GM10248 (cell line): ENCODE measurements at regions of chr1 and their contacts with region 1.

Region 1: GRCh38 chr1:67479146-67479891 is 49.1 kb upstream of the SERBP1 start:
- DNase-seq: no peak
- CTCF ChIP-seq: no peak

Region 2: DNA sequence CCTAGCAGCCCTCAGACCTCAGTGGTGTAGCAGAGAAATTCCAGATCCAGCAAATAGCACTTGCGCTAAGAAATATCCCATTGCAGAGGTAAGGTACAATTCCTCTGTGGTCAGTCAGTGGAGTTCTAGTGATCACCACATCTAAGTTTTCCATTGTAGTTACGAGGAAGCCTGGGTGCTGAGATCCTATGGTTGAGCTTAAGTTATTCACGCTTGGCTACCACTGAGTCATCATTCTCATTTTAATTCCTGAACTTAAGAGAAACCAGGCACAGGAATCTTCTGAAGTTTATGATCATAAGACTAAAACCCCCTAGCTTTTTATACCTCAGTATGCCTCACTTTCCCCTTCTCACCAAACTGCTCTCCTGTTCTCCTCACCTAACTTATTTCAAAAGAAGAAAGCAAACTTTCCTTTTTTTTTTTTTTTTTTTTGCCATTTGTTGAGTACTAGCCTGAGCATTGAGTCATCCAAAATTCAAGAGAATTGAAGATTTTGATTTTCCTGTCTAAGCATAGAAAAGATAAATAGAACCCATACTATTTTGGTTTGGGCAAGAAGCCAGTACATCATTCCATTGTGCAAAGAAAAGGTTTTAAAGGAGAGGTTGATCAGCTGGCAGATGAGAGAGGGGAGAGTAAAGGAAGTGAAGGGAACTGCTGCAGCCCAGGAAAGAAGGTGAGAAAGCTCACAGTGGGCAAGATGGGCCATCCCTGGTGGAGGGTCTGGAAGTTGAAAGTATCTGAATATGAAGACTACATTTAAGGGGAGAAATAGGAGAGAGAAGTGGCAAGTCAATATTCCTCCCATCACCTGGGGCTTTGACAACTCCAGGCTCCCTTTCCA is 89.1 kb before region 1 on chr1:
- CTCF ChIA-PET with region 1: no interaction called
- POLR2A ChIA-PET with region 1: no interaction called
- DNase-seq: no peak
- CTCF ChIP-seq: no peak

Region 3: DNA sequence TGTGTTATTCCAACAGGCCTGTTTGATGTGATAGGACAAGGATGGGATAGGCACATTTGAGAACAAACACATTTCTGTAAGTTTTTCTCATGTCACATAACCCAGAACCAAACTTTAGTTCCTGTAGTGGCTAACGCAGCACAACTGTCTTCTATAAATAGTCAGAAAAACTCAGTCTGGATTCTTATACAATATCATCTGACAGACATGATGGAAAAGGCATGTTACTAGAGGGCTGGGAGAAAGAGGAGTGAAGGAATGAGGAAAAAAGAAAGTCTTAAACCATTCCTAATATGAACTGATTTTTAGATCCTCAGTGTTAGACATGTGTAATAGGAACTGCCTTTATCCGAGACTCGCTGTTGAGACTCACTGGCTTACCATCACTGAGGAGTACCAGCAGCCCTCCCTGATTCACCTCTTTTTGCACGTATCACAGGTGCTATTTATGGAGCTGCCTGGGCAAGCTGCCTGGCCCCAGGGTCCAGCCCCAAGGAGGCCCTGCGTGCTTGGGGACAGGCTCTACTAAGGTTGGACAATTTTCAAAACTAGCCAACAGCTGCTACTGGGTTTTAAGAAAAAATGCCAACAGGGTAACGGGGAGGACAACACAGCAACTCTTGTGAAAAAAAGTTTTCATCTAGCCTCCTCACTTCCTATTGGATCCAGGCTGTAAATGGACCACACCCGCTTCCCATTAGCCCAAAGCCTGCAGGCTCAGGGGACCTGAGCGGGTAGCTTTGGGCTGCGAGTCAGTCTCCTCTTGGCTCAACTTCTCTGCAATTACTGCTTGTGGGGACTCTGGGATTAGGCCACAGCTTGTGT is 18.4 kb before region 1 on chr1:
- CTCF ChIA-PET with region 1: interaction called, 11 read pairs
- POLR2A ChIA-PET with region 1: no interaction called
- DNase-seq: no peak
- CTCF ChIP-seq: no peak

Region 4: GRCh38 chr1:67489643-67490042 is 10.3 kb after region 1 on chr1:
- CTCF ChIA-PET with region 1: interaction called, 30 read pairs
- POLR2A ChIA-PET with region 1: no interaction called
- DNase-seq: peak; percentile 49
- CTCF ChIP-seq: peak; percentile 29

Region 5: DNA sequence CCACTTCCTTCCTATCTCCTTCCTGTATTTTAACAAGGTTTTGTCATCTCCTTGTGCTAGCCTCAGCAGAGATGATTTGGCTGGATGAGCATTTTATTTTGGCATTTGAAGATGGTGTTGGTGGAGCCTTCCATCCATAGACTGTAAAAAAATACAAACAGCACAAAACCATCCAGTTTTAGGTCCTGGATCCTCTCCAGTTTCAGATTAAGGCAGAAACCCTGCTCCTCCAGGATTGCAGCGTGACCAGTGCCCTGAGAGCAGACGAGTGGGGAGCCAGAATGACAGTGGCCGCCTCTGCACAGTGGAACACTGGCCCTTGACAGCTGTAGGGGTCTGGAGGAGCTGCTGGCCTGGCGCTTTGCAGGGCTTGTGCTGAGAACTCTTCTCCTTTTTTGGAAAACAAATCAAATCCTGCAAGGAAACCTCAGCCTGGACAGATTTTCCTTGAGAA is 133.5 kb after region 1 on chr1:
- CTCF ChIA-PET with region 1: no interaction called
- POLR2A ChIA-PET with region 1: no interaction called
- DNase-seq: no peak
- CTCF ChIP-seq: no peak